Panc1 (cell line): ENCODE measurements at regions of chr17 and their contacts with region 1.

Region 1: DNA sequence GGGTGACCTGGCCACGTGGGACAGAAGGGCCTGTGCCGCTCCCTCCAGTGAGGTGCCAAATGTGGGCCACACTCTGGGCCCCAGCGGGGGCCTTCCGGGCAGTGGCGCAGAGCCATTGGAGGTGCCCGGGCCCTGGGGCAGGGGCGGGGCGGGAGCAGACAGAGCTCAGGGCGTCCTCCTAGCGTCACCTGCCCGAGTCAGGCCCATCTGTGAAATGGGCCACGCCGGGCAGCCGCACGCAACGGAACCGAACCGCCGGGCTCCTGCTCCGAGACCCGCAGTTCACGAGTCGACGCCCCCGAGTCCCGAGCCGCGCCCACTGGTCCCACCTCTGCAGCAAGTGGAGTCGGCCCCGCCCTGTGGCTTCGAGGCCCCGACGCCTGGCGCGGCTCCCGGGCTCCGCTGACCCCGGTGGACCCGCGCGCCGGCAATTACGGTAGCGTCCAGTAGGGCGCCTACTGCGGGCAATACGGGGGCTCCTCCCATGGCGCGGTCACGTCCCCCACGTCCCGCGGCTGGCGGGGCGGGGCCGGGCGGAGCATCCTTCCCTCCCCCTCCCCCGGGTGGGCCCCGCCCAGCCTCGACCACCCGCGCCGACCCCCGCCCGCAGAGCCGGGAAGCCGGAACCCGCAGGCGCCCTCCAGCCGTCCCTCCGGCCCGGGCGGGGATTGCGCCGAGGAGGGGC is 1.9 kb downstream of the SLC16A3 start:
- DNase-seq: no peak
- ATAC-seq: peak; percentile 56
- H3K4me3 ChIP-seq: peak overlapping the region; percentile 72 to 97
- H3K27ac ChIP-seq: peak overlapping the region; percentile 98
- H3K4me1 ChIP-seq: peaks cover 47% of the 10 kb centered on the region
- H3K27me3 ChIP-seq: no peaks in the 10 kb centered on the region
- CTCF ChIP-seq: no peak; the same call in 1 of the 2 replicates

Region 2: DNA sequence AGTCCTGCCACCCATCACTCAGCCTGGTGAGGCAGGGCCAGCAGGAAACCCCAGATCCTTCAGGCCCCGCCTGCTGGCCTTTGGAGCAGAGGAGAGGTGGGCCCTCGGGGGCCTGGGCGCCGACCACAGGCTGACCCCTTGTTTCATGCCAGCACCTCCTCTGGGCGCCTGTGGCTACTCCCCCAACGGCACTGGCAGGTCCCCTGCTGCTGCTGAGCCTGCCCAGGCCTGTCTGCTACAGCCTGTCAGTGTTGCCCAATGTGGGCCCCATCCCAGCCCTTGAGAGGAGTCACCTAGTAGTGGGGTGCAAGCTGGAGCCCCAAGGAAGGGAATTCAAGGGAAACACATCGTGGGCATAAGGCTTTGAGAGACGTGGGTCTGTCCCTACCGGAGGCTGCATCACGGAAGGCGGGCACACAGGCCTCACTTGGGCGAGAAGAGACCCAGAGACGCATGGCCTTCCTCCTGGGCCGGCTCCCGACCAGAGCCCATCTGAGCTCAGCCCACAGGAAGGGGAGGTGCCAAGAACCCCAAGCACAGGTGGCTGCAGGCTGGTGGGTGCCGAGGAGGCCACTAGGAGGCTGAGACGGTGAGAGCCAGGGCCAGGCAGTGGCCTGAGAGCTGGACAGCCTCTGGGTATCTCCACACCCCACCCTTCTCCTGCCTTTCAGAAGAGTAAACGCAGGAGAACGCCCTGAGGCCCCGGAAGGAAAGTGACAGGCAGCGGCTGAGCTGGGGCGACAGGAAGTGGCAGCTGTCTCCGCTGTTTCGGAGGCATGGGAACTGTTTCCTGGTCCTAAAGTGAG is 124.7 kb before region 1 on chr17:
- CTCF ChIA-PET with region 1: no interaction called
- POLR2A ChIA-PET with region 1: no interaction called
- in situ Hi-C with region 1: no loop called
- intact Hi-C with region 1: loop called (anchors 10 kb)
- DNase-seq: no peak
- ATAC-seq: peak; percentile 70
- H3K4me3 ChIP-seq: peak overlapping the region in 1 of 2 experiments; percentile 24; a peak in 2 of 4 replicates
- H3K27ac ChIP-seq: peak overlapping the region; percentile 97
- H3K4me1 ChIP-seq: peaks cover 69% of the 10 kb centered on the region
- H3K27me3 ChIP-seq: no peaks in the 10 kb centered on the region
- CTCF ChIP-seq: peak; percentile 61

Region 3: DNA sequence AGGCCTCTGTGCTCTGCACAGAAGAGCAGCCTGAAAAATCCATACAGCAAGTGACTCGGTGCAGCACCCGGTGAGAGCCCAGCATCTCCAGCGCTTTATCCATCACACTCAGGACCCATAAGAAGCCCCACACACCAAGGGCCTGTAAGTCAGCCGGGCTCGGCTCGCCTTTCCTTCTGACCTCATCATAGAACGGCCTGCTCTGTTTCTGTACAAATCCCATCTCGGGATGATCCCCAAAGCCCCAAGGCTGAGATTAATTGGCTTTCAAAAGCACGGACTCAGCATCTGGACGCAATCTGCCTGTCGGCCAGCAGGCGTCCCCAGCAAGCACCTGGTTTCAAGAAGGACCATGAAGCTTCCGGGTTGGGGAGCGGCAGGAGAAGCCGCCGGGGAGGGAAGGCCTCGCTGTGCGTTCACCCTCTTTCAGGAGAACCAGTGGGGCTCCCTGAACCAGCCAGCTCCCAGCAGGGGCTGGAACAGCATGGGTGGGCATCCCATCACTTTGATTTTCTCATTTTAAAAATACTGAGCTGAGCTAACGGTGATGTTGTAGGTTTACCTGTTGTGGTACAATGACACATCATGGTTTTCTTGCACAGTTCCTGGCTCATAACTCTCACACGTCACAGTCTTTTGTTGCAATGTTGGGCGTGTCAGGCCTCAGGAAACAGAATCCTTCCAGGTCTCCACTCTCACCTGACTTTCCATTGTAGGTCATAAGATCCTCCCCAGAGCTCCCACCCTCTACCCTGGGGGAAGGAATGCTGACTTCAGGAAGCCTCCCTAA is 24.9 kb before region 1 on chr17:
- CTCF ChIA-PET with region 1: interaction called, 12 read pairs
- POLR2A ChIA-PET with region 1: no interaction called
- in situ Hi-C with region 1: no loop called
- intact Hi-C with region 1: no loop called
- DNase-seq: peak; percentile 75
- ATAC-seq: peak; percentile 81
- H3K4me3 ChIP-seq: peak overlapping the region in 1 of 2 experiments; percentile 16; a peak in 1 of 4 replicates
- H3K27ac ChIP-seq: peak overlapping the region; percentile 95
- H3K4me1 ChIP-seq: peaks cover 41% of the 10 kb centered on the region
- H3K27me3 ChIP-seq: no peaks in the 10 kb centered on the region
- CTCF ChIP-seq: peak; percentile 97